HepG2 (cell line): ENCODE measurements at regions of chr7 and their contacts with region 1.

Region 1: GRCh38 chr7:89826557-89826956 is 327.7 kb upstream of the STEAP1 start:
- DNase-seq: no peak
- ATAC-seq: no peak
- H3K4me3 ChIP-seq: no peak overlapping the region
- H3K27ac ChIP-seq: no peak overlapping the region
- H3K4me1 ChIP-seq: no peaks in the 10 kb centered on the region
- H3K27me3 ChIP-seq: no peaks in the 10 kb centered on the region
- CTCF ChIP-seq: no peak
- EP300 ChIP-seq: no peak
- POLR2A ChIP-seq: no peak
- RAD21 ChIP-seq: no peak

Region 2: GRCh38 chr7:88842201-88842600 is 984.4 kb before region 1 on chr7:
- CTCF ChIA-PET with region 1: no interaction called
- POLR2A ChIA-PET with region 1: no interaction called
- in situ Hi-C with region 1: no loop called
- intact Hi-C with region 1: loop called (anchors 5 kb)
- DNase-seq: no peak
- ATAC-seq: no peak
- H3K4me3 ChIP-seq: no peak overlapping the region
- H3K27ac ChIP-seq: no peak overlapping the region
- H3K4me1 ChIP-seq: no peaks in the 10 kb centered on the region
- H3K27me3 ChIP-seq: no peaks in the 10 kb centered on the region
- CTCF ChIP-seq: no peak
- EP300 ChIP-seq: no peak
- POLR2A ChIP-seq: no peak
- RAD21 ChIP-seq: no peak

Region 3: GRCh38 chr7:89887489-89887888 is 60.9 kb after region 1 on chr7:
- CTCF ChIA-PET with region 1: no interaction called
- POLR2A ChIA-PET with region 1: no interaction called
- in situ Hi-C with region 1: no loop called
- intact Hi-C with region 1: no loop called
- DNase-seq: peak; percentile 56
- ATAC-seq: peak; percentile 96
- H3K4me3 ChIP-seq: no peak overlapping the region
- H3K27ac ChIP-seq: no peak overlapping the region
- H3K4me1 ChIP-seq: peaks cover 13% of the 10 kb centered on the region
- H3K27me3 ChIP-seq: no peaks in the 10 kb centered on the region
- CTCF ChIP-seq: no peak
- EP300 ChIP-seq: 0 out of 4 replicates have a peak, but pooled peaks of 1 of the 2 experiments have one; percentile 14
- POLR2A ChIP-seq: no peak
- RAD21 ChIP-seq: no peak